ENCODE measurements at regions of chr15 and their contacts with region 1.

Region 1: GRCh38 chr15:77975332-77976094 is 102.0 kb downstream of the TBC1D2B start:
- DNase-seq: no peak
- ATAC-seq: no peak
- H3K4me3 ChIP-seq: no peak overlapping the region
- H3K27ac ChIP-seq: no peak overlapping the region
- H3K4me1 ChIP-seq: peaks cover 0 to 18% of the 10 kb centered on the region in 2 experiments; a peak in 2 of 5 replicates
- H3K27me3 ChIP-seq: peaks cover 7 to 26% of the 10 kb centered on the region in 2 experiments; a peak in 3 of 5 replicates
- CTCF ChIP-seq: no peak
- EP300 ChIP-seq: no peak
- POLR2A ChIP-seq: no peak
- RAD21 ChIP-seq: no peak

Region 2: DNA sequence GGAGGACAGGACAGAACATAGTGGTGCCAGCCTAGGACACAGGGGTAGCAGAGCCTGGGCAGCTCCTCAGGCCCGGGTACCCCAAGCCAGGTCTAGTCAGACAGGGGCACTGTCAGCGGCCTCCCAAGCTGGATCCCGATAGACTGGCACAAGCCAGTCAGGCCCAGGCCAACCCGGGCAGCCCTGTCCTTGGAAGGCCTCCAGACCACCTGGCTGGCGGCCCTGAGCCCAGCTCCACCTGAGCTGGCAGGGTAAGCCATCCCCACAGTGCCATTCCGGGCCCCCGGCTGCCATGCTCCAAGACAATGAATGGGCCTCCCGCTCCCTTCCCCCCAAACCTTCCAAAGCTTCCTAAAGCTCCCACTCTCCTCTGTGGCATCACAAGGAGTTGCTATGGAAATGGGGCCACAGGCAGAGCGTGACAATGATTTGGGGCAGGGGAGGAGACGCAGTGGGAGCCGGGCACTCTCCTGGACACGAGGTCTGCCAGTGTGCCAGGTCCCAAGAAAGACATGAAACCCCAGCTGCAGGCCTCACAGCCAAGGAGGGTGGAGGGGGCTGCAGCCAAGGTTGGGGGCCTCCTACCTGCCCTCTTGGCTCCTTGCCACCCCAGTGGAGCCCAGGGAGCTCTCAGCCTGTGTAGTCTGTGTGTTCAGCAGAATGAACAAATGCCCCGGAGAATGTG is 177.2 kb before region 1 on chr15:
- CTCF ChIA-PET with region 1: no interaction called
- POLR2A ChIA-PET with region 1: no interaction called
- in situ Hi-C with region 1: no loop called
- intact Hi-C with region 1: no loop called
- DNase-seq: no peak
- ATAC-seq: no peak
- H3K4me3 ChIP-seq: no peak overlapping the region
- H3K27ac ChIP-seq: no peak overlapping the region
- H3K4me1 ChIP-seq: peaks cover 0 to 29% of the 10 kb centered on the region in 2 experiments; a peak in 2 of 5 replicates
- H3K27me3 ChIP-seq: peaks cover 0 to 16% of the 10 kb centered on the region in 2 experiments; a peak in 2 of 5 replicates
- CTCF ChIP-seq: no peak
- EP300 ChIP-seq: no peak
- POLR2A ChIP-seq: no peak
- RAD21 ChIP-seq: no peak

Region 3: DNA sequence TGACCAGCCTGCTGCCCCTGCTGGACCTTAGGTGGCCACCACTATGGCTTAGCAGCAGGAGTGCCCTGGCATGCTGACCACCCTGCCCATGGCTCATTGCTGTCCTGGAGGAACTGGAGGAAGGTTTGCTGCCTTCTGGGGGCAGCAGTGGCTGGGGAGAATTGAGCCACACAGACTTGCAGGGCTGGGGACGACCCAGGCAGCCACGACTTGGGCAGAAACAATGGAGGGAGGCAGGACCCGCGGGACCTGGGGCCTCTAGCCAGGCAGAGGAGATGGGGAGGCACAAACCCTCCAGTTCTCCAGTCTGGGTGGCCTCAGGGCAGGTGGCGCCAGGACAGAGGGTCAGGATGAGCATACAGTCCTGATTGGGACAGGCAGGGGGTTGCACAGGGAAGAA is 802.9 kb after region 1 on chr15:
- CTCF ChIA-PET with region 1: no interaction called
- POLR2A ChIA-PET with region 1: no interaction called
- in situ Hi-C with region 1: loop called (anchors 5 kb)
- intact Hi-C with region 1: no loop called
- DNase-seq: no peak
- ATAC-seq: no peak
- H3K4me3 ChIP-seq: no peak overlapping the region
- H3K27ac ChIP-seq: no peak overlapping the region
- H3K4me1 ChIP-seq: peaks cover 0 to 18% of the 10 kb centered on the region in 2 experiments; a peak in 2 of 5 replicates
- H3K27me3 ChIP-seq: peaks cover 5 to 18% of the 10 kb centered on the region in 2 experiments; a peak in 4 of 5 replicates
- CTCF ChIP-seq: no peak
- EP300 ChIP-seq: no peak
- POLR2A ChIP-seq: no peak
- RAD21 ChIP-seq: no peak